Activated B cell treated with CpG ODN at 0.5 μM for 24 hours (primary cell): ENCODE measurements at regions of chr12 and their contacts with region 1.

Region 1: DNA sequence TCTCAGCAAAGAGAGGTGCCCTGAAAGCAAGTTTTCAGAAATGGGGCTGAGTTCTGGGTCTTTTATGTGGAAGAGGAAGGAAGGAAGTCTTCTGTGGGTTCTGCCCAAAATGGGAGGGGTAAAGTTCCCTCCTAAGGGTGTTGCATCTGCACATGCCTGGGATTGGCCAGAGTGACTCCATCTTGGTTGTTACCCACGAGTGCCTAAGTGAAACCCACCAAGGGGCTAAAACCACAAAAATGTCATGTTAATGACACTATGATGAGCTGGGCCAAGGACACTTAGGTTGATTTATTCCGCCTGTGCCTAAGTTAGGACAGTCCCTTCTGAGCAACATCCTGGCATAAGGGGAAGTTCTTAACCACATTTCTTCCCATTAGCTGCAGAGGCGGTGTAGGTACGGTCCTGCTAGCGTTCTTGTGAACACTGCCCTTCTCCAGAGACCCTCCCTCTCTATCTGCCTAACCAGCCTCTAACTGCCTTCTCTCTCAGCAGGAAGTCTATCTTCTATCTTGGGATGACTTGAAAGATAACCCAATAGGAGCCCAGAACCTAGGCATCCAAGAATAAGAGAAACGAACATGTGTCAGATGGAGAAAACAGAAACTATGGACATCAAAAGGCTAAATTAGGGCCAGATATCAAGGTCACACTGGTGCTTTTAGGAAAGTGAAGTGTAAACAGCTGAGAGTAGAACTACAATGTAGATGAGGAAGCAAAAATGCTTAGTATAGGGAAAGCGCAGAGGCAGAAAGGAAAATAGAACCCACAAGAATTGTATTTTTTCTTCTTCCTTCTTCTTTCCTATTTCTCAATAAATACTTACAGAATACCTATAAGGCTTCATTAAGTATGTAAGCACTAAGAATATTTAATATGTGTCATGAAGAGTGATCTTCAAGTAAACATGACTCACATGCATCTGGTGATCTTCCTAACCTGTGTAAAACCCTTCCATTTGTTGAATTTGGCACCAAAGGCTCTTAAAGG is 104.2 kb upstream of the AMN1 start:
- DNase-seq: peak; percentile 36
- ATAC-seq: peak; percentile 84
- H3K4me3 Mint-ChIP-seq: peak overlapping the region; percentile 59
- H3K27ac Mint-ChIP-seq: peak overlapping the region; percentile 94
- H3K4me1 Mint-ChIP-seq: peaks cover 76% of the 10 kb centered on the region
- H3K27me3 Mint-ChIP-seq: no peaks in the 10 kb centered on the region
- CTCF ChIP-seq: no peak

Region 2: GRCh38 chr12:31773867-31774266 is 59.2 kb before region 1 on chr12:
- CTCF ChIA-PET with region 1: no interaction called
- POLR2A ChIA-PET with region 1: no interaction called
- intact Hi-C with region 1: loop called (anchors 1 kb)
- DNase-seq: no peak
- ATAC-seq: peak; percentile 85
- H3K4me3 Mint-ChIP-seq: no peak overlapping the region
- H3K27ac Mint-ChIP-seq: peak overlapping the region; percentile 65
- H3K4me1 Mint-ChIP-seq: peaks cover 26% of the 10 kb centered on the region
- H3K27me3 Mint-ChIP-seq: no peaks in the 10 kb centered on the region
- CTCF ChIP-seq: no peak

Region 3: DNA sequence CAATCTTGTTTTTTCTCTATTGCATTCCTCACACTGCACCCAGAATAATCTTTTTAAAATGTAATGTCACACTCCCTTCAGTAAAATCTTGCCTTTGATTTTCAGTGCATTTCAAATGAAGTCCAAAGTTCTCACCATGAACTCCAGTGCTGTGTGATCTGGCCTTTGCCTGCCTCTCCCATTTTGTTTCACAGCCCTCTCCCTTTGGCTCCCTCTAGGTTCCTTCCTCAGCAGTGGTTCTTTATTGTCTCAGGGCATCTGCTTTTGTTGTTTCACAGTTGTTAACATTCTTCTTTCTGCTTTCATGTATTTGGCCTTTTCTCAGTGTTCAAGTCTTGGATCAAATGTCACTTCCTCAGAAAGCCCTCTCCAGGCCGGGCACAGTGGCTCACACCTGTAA is 19.7 kb before region 1 on chr12:
- CTCF ChIA-PET with region 1: no interaction called
- POLR2A ChIA-PET with region 1: interaction called, 68 read pairs
- intact Hi-C with region 1: loop called (anchors 1 kb)
- DNase-seq: no peak
- ATAC-seq: no peak
- H3K4me3 Mint-ChIP-seq: no peak overlapping the region
- H3K27ac Mint-ChIP-seq: peak overlapping the region; percentile 69
- H3K4me1 Mint-ChIP-seq: peaks cover 45% of the 10 kb centered on the region
- H3K27me3 Mint-ChIP-seq: no peaks in the 10 kb centered on the region
- CTCF ChIP-seq: no peak

Region 4: DNA sequence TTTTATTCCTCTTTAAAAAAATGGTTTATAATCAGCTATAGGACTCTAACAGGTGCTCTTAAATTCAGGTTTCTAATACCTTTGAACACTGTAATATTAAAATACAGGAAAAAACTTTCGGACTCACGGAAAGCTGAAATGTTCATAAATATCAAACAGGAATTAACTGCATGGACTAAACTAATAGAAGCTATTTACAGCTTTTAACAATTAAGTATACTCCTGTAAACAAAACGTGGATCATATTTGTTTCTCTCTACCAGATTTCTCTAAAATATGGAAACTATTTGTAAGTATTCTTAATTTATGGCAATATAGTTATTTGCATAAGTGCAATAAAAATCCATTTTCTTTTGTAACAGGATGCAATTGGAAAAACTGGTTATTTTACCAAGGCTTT is 17.2 kb after region 1 on chr12:
- CTCF ChIA-PET with region 1: no interaction called
- POLR2A ChIA-PET with region 1: interaction called, 6 read pairs
- intact Hi-C with region 1: loop called (anchors 2 kb)
- DNase-seq: no peak
- ATAC-seq: no peak
- H3K4me3 Mint-ChIP-seq: no peak overlapping the region
- H3K27ac Mint-ChIP-seq: no peak overlapping the region
- H3K4me1 Mint-ChIP-seq: peaks cover 15% of the 10 kb centered on the region
- H3K27me3 Mint-ChIP-seq: no peaks in the 10 kb centered on the region
- CTCF ChIP-seq: no peak

Region 5: GRCh38 chr12:31874961-31875608 is 42.0 kb after region 1 on chr12:
- CTCF ChIA-PET with region 1: no interaction called
- POLR2A ChIA-PET with region 1: interaction called, 13 read pairs
- intact Hi-C with region 1: loop called (anchors 2 kb)
- DNase-seq: peak; percentile 45
- ATAC-seq: peak; percentile 85
- H3K4me3 Mint-ChIP-seq: peak overlapping the region; percentile 77
- H3K27ac Mint-ChIP-seq: peak overlapping the region; percentile 100
- H3K4me1 Mint-ChIP-seq: peaks cover 77% of the 10 kb centered on the region
- H3K27me3 Mint-ChIP-seq: no peaks in the 10 kb centered on the region
- CTCF ChIP-seq: no peak

Region 6: DNA sequence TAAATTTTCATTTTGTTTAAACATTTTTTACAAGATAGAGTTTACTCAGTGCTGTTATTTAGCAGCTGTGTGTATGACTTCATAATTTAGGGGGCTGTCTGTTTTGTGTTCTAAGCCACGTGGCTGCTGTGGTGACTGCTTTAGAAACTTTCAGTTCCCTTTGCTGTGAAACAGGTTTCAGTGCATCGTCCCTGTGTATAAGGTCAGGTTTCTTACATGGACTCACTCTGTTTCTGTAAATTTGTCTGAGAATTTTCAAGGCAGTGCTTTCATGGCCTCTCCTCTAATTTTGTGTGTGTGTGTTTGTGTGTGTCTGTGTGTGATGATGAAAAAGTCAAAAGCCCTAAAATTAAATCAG is 306.0 kb after region 1 on chr12:
- CTCF ChIA-PET with region 1: no interaction called
- POLR2A ChIA-PET with region 1: no interaction called
- intact Hi-C with region 1: loop called (anchors 10 kb)
- DNase-seq: peak; percentile 27
- ATAC-seq: peak; percentile 83
- H3K4me3 Mint-ChIP-seq: peak overlapping the region; percentile 79
- H3K27ac Mint-ChIP-seq: peak overlapping the region; percentile 96
- H3K4me1 Mint-ChIP-seq: peaks cover 74% of the 10 kb centered on the region
- H3K27me3 Mint-ChIP-seq: no peaks in the 10 kb centered on the region
- CTCF ChIP-seq: no peak